ENCODE measurements at regions of chr11 and their contacts with region 1.

Region 1: DNA sequence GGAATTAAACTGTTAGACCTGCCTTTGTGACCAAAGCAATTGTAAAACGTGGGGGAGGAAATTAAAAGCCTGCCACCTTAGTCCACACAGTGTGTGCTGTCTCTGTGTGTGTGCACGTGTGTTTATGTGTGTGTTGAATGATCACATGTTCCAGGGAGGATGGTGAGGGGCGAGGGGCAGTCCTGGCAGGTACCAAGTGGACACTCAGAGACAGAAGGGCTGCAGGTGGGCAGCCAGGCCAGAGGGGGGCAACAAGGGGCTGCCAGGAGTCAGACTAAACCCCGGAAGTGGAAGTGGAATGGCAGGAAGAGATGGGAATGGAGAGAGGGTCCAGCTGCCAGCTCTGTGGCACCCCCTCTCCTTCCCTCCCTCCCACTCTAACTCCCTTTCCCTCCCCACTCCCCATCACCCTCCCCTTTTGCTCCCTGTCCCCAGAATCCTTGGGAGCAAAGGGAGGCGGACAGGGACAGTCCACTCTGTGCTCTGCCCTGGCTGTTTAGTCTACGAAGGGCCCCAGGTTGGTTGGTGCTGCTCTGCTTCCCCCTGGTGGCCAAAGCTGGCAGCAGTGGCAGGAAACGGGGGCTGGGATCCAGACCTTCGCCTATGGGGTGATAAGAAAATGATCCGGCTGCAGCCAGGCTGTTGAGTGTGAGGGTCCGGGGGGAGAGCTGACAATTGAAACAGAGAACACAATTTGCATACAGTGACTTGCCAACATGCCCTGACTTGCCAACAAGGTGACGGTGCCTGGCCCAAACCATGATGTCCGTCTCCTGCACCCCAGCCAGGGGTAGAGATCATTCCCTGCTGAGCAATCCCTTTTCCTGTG is 24.4 kb downstream of the P2RY2 start:
- DNase-seq: peak; percentile 92
- H3K4me3 Mint-ChIP-seq: no peak overlapping the region
- H3K27ac Mint-ChIP-seq: no peak overlapping the region
- H3K4me1 Mint-ChIP-seq: peaks cover 2% of the 10 kb centered on the region
- H3K27me3 Mint-ChIP-seq: peaks cover 11% of the 10 kb centered on the region

Region 2: DNA sequence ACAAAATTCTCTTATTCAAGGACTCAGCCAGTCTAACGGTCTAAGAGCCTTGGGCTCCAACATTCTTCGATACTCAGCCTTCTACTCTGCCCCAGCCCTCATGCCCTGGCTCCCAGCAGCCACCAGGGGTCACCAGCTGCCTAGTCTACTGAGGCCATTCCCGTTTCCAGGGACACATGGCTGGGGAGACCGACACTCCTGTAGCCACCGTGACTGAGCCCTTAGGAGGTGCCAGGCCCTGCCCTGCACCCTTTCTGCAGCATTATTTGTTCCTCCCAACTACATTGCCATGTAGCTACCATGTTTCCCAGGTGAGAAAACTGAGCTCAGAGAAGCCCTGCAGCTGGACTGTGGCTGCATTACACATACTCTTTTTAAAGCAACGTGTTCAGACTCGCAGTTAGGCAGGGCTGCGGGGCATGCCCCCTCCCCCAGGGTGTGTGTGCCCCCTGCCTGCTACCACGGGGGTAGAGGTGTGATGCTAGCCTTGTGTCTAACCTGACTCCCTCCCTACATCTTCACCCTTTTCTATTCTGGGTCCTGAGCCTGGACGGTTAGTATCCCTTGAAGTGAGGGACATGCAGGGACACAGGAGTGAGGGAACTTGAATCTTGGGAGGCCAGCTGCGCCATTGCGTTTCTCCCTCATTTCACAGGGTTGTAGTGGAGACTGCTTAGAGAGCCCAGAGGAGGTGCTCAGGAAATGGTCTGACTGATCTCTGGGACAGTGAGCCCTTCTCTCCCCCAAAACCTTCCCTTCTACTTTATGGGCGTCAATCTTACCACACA is 410.8 kb before region 1 on chr11:
- intact Hi-C with region 1: loop called (anchors 2 kb)
- DNase-seq: peak; percentile 85
- H3K4me3 Mint-ChIP-seq: no peak overlapping the region
- H3K27ac Mint-ChIP-seq: peak overlapping the region; percentile 37
- H3K4me1 Mint-ChIP-seq: peaks cover 21% of the 10 kb centered on the region
- H3K27me3 Mint-ChIP-seq: no peaks in the 10 kb centered on the region

Region 3: GRCh38 chr11:72924568-72925190 is 317.8 kb before region 1 on chr11:
- intact Hi-C with region 1: loop called (anchors 5 kb)
- DNase-seq: no peak
- H3K4me3 Mint-ChIP-seq: no peak overlapping the region
- H3K27ac Mint-ChIP-seq: no peak overlapping the region
- H3K4me1 Mint-ChIP-seq: peaks cover 3% of the 10 kb centered on the region
- H3K27me3 Mint-ChIP-seq: no peaks in the 10 kb centered on the region

Region 4: GRCh38 chr11:73184953-73185671 is 57.4 kb before region 1 on chr11:
- intact Hi-C with region 1: loop called (anchors 1 kb)
- DNase-seq: peak; percentile 86
- H3K4me3 Mint-ChIP-seq: peak overlapping the region; percentile 52
- H3K27ac Mint-ChIP-seq: no peak overlapping the region
- H3K4me1 Mint-ChIP-seq: peaks cover 8% of the 10 kb centered on the region
- H3K27me3 Mint-ChIP-seq: peaks cover 25% of the 10 kb centered on the region

Region 5: DNA sequence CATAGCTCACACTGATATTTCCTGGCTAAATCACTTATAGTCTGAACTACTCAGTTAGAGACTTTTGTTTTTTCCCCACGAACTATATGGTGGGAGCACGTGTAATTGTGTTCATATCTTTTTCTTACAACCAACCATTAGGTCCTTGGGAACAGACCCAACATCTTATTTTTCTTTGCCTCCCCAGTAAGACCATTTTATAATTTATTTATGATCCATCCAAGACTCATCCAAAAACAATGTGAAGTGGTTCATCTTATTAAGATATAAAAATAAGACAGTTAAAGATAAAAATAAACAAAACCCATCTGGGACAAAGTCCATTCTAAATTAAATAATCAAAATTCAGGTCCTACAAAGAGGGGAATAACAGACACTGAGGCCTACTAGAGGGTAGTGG is 264.6 kb after region 1 on chr11:
- intact Hi-C with region 1: no loop called
- DNase-seq: no peak
- H3K4me3 Mint-ChIP-seq: no peak overlapping the region
- H3K27ac Mint-ChIP-seq: no peak overlapping the region
- H3K4me1 Mint-ChIP-seq: peaks cover 2% of the 10 kb centered on the region
- H3K27me3 Mint-ChIP-seq: no peaks in the 10 kb centered on the region

Measured in activated CD4-positive, alpha-beta T cell treated with anti-CD3 and anti-CD28 coated beads, Interleukin-2, amount 10 ng/mL, durations not matched to agents 24 days and 14 days (primary cell).